ENCODE measurements at regions of chr2 and their contacts with region 1.

Region 1: DNA sequence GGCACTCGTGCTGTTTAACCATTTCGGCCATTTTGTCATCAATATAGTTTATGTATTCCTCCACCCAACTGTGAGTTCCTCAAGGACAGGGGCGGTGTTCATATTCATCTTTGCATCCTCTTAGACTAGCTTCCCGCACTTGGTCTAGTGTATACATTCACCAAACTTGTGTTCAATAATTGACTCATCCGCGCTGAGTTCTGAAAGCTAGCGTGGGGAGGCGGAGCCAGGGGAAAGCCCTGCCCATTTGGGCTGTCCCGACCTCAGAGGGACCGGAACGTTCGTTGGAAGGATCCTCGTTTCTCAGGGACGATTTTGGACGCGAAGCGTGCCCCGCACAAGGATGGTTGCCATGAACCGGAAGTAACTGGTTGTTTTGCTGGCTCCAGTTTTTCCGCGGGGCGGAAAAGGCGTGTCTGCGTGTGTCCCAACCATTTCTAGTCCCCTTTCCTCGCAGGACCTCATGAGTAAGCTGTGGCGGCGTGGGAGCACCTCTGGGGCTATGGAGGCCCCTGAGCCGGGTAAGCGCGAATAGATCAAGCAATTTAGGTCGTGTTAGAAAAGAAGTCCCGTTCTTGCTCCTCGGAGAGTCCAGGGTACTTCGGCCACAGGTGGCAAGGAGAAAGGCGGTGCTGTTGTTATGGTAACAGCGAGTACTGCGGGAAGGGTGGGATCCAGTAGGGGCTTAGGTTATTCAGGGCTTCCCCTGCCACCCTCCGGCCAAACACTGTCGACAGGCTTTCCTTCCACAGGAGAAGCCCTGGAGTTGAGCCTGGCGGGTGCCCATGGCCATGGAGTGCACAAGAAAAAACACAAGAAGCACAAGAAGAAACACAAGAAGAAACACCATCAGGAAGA is at the start of gene INO80B:
- DNase-seq: peak; percentile 92 to 99 (median 96)

Region 2: GRCh38 chr2:74147727-74148456 is 307.0 kb before region 1 on chr2 and contains the start of gene BOLA3:
- intact Hi-C with region 1: no loop called
- DNase-seq: peak; percentile 60 to 96 (median 90)

Region 3: DNA sequence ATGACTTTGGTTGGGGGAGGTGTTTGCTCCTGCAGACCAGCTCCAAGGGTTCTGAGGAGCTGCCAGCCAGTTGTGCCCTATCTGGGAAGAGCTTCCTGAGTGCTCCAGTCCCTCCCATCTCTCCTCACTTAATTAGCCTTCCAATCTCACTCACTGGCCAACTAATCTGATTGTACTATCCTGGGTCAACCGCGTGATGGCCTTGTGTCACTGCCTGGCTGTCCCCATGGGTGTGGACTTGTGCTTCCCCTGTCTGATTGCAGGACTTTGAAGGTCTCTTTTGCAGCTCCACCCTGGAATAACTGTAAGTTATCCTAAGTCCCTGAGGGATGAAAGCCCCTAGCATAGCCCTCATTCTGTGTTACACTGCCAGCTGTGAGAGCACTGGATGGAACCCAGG is 176.7 kb before region 1 on chr2:
- intact Hi-C with region 1: no loop called
- DNase-seq: no peak

Region 4: DNA sequence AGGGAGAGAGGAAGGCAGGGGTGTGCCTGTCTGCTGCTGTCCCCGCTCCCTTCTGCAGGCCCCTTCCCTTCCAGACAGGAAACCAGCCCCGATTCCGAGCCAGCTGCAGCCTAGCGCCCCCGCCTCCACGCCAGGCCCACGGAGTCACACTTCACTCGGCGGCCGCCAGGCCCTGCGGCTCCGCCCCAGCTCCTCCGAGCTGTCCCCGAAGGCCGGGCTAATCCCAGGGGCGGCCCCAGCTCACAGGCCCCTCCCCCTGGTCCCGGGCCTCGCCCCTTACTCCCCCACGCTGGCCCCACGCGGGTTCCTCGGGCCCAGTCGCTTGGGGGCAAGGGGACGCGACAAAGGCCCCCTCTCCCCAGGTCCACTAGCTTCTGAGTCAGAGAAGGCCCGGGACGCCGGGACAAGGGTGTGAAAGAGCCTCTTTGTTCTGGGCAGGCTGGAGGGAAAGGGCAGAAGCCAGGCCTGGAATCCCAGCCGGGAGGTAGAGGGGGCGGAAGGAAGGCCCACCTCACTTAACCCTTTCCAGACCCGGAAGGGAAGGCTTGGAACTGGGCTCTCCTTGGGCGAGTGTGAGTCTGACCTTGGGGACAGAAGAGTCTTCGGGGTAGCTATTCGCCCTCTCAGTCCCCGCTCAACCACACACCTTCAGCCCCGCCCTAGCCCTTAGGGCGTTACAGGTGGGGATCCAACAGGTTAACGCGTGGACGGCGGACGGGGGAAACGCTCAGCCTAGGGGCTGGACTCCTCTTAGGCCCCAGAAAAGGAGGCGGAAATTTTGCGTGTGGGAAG is 14.3 kb before region 1 on chr2:
- intact Hi-C with region 1: loop called (anchors 2 kb)
- DNase-seq: peak; percentile 76 to 97 (median 92)

Region 5: GRCh38 chr2:74816540-74817303 is 361.8 kb after region 1 on chr2:
- intact Hi-C with region 1: no loop called
- DNase-seq: peak in 1 of 42 donors; percentile 33